ENCODE measurements at regions of chr3 and their contacts with region 1.

Region 1: DNA sequence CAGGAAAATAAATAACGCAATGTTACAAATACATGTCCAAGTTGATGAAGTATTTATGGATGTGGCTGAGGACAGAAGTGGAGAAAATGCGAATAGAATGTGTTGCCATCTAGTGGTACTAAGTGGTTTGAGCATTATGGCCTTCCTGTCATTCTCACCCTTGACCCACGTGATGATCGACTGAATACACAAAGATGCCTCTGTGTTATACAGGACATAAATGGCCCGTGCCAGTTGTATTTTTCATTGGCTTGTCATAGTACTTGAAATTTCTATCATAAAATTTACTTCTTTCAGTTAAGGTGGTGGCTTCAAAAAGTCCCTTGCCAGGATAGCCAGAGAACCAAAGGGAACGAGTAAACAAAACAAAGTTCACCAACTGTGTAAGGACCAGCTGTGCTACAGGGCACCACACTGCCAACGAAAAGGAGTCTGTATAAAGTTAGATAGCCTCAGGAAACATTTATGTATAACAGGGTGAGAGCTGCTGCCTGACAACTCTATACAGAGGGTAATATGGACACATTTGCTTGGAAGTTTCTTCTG is 103.7 kb downstream of the MYH15 start:
- DNase-seq: peak; percentile 68
- ATAC-seq: peak; percentile 99
- H3K4me3 ChIP-seq: no peak overlapping the region
- H3K27ac ChIP-seq: no peak overlapping the region
- H3K4me1 ChIP-seq: peaks cover 4% of the 10 kb centered on the region; the same call in 1 of the 2 replicates
- H3K27me3 ChIP-seq: no peaks in the 10 kb centered on the region
- CTCF ChIP-seq: peak; percentile 67 to 89 (median 86)
- EP300 ChIP-seq: no peak
- POLR2A ChIP-seq: no peak
- RAD21 ChIP-seq: peak; percentile 82

Region 2: DNA sequence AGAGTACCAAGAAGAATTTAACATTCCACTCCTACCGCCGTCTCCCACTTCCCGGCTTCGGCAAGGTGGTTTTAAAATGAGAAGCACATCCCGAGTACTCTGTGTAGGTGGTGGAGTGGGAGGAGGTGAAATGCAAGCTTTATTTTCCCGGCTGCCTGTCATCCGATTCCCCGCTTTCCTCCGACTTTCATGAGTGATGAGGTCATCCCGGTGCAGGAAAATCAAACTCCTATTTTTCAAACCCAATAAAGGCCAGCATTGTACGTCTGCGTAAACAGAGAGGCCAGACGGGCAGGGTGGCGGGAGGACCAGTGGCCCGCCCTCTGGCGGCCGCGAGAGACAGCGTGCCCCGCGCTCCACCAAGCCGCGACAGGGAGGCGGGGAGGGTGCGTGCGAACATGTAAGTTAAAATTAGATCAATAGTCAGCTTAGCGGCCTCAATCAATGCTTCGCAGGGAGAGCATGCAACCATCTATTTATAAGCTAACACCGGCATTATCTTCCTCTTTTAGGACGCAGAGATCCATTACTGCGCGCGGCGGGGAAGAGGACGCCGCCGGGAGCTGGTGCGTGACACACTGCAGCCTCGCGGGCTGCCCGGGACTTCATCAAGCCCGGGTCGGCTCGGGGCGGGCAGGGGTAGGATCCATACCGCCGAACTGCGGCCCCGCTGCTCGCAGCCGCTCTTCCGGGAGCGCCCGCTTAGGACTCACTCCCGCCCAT is 479.2 kb before region 1 on chr3:
- CTCF ChIA-PET with region 1: interaction called, 10 read pairs
- POLR2A ChIA-PET with region 1: no interaction called
- RAD21 ChIA-PET with region 1: no interaction called
- SMC1A ChIA-PET with region 1: interaction called, 6 read pairs
- in situ Hi-C with region 1: no loop called
- intact Hi-C with region 1: no loop called
- DNase-seq: no peak
- ATAC-seq: peak; percentile 99
- H3K4me3 ChIP-seq: peak overlapping the region; percentile 57; the same call in 1 of the 2 replicates
- H3K27ac ChIP-seq: no peak overlapping the region
- H3K4me1 ChIP-seq: peaks cover 3% of the 10 kb centered on the region; the same call in 1 of the 2 replicates
- H3K27me3 ChIP-seq: peaks cover 0 to 5% of the 10 kb centered on the region in 2 experiments; a peak in 3 of 4 replicates
- CTCF ChIP-seq: peak; percentile 77 to 93 (median 91)
- EP300 ChIP-seq: no peak
- POLR2A ChIP-seq: no peak
- RAD21 ChIP-seq: peak; percentile 60

Region 3: GRCh38 chr3:108090701-108091451 is 315.9 kb before region 1 on chr3 and contains the start of gene CD47:
- CTCF ChIA-PET with region 1: no interaction called
- POLR2A ChIA-PET with region 1: no interaction called
- RAD21 ChIA-PET with region 1: no interaction called
- SMC1A ChIA-PET with region 1: interaction called, 3 read pairs
- in situ Hi-C with region 1: no loop called
- intact Hi-C with region 1: loop called (anchors 5 kb)
- DNase-seq: no peak
- ATAC-seq: peak; percentile 72
- H3K4me3 ChIP-seq: peak within 1 kb of the TSS; percentile 95
- H3K27ac ChIP-seq: peak within 1 kb of the TSS; percentile 95
- H3K4me1 ChIP-seq: peaks cover 12% of the 10 kb centered on the region; the same call in 1 of the 2 replicates
- H3K27me3 ChIP-seq: no peaks in the 10 kb centered on the region
- CTCF ChIP-seq: no peak
- EP300 ChIP-seq: no peak
- POLR2A ChIP-seq: peak; percentile 85
- RAD21 ChIP-seq: no peak
- polyA plus RNA-seq, gene CD47: 22.9 to 61.6 TPM

Region 4: DNA sequence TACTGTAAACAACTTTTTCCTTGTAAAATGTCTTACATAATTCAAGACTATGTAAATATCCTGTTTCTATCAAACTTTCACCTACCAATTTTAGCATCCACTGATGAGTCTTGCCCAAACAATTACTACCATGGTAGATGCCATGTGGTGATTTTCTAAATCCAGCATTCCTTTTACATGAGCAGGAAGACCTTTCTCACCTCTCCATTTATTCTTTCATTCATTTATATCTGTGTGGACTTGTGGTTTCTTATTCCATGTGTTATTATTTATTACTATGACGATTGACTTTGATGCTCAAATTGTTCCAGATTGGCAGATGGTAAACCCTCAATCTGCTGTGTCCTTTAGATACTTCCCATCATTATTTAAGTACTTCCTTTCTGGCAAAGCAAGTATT is 246.9 kb before region 1 on chr3:
- CTCF ChIA-PET with region 1: interaction called, 31 read pairs
- POLR2A ChIA-PET with region 1: no interaction called
- RAD21 ChIA-PET with region 1: interaction called, 7 read pairs
- SMC1A ChIA-PET with region 1: interaction called, 23 read pairs
- in situ Hi-C with region 1: no loop called
- intact Hi-C with region 1: no loop called
- DNase-seq: no peak
- ATAC-seq: no peak
- H3K4me3 ChIP-seq: no peak overlapping the region
- H3K27ac ChIP-seq: no peak overlapping the region
- H3K4me1 ChIP-seq: no peaks in the 10 kb centered on the region
- H3K27me3 ChIP-seq: no peaks in the 10 kb centered on the region
- CTCF ChIP-seq: no peak
- EP300 ChIP-seq: no peak
- POLR2A ChIP-seq: no peak
- RAD21 ChIP-seq: no peak

Region 5: DNA sequence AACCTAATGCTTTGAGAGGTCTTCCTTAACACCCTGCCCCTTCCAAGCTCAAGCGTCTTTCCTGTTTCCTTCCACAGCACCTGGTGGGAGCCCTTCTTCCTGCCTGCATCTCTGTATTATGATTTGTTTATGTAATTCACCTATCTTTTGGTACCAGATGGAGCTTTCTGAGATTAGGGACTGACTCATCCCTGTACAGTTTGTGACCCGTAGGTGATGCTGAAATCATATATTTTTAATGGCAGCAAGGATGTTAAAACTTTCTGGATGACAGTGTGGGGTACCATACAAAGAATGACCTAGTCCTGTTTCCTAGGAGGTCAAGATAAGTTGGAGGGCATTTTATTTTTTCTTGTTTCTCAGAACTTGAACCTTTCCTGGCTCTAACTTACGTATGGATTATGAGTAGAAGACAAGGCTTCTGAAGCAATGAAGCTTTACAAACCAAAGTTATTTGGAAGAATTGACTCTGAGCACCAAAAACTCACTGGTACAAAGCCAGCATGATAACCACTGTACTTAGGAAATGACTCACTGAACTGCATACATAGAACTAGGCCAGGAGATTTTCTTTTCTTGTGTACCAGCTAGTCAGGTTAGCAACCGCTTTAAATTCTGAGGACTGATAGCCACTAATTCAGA is 63.8 kb before region 1 on chr3:
- CTCF ChIA-PET with region 1: interaction called, 6 read pairs
- POLR2A ChIA-PET with region 1: no interaction called
- RAD21 ChIA-PET with region 1: interaction called, 4 read pairs
- SMC1A ChIA-PET with region 1: interaction called, 7 read pairs
- in situ Hi-C with region 1: no loop called
- intact Hi-C with region 1: loop called (anchors 5 kb)
- DNase-seq: peak; percentile 36
- ATAC-seq: peak; percentile 87
- H3K4me3 ChIP-seq: no peak overlapping the region
- H3K27ac ChIP-seq: no peak overlapping the region
- H3K4me1 ChIP-seq: peaks cover 10% of the 10 kb centered on the region
- H3K27me3 ChIP-seq: no peaks in the 10 kb centered on the region
- CTCF ChIP-seq: no peak
- EP300 ChIP-seq: no peak
- POLR2A ChIP-seq: no peak
- RAD21 ChIP-seq: no peak

Region 6: GRCh38 chr3:108461661-108462111 is 55.0 kb after region 1 on chr3:
- CTCF ChIA-PET with region 1: no interaction called
- POLR2A ChIA-PET with region 1: no interaction called
- RAD21 ChIA-PET with region 1: no interaction called
- SMC1A ChIA-PET with region 1: no interaction called
- in situ Hi-C with region 1: no loop called
- intact Hi-C with region 1: no loop called
- DNase-seq: no peak
- ATAC-seq: no peak
- H3K4me3 ChIP-seq: no peak overlapping the region
- H3K27ac ChIP-seq: no peak overlapping the region
- H3K4me1 ChIP-seq: no peaks in the 10 kb centered on the region
- H3K27me3 ChIP-seq: no peaks in the 10 kb centered on the region
- CTCF ChIP-seq: no peak
- EP300 ChIP-seq: no peak
- POLR2A ChIP-seq: no peak
- RAD21 ChIP-seq: no peak

Region 7: GRCh38 chr3:108477511-108478147 is 70.9 kb after region 1 on chr3:
- CTCF ChIA-PET with region 1: interaction called, 7 read pairs
- POLR2A ChIA-PET with region 1: no interaction called
- RAD21 ChIA-PET with region 1: interaction called, 4 read pairs
- SMC1A ChIA-PET with region 1: interaction called, 9 read pairs
- in situ Hi-C with region 1: no loop called
- intact Hi-C with region 1: loop called (anchors 2 kb)
- DNase-seq: peak; percentile 12
- ATAC-seq: peak; percentile 89
- H3K4me3 ChIP-seq: no peak overlapping the region
- H3K27ac ChIP-seq: no peak overlapping the region
- H3K4me1 ChIP-seq: no peaks in the 10 kb centered on the region
- H3K27me3 ChIP-seq: no peaks in the 10 kb centered on the region
- CTCF ChIP-seq: peak; percentile 66 to 70 (median 69)
- EP300 ChIP-seq: no peak
- POLR2A ChIP-seq: no peak
- RAD21 ChIP-seq: peak; percentile 86

Region 8: DNA sequence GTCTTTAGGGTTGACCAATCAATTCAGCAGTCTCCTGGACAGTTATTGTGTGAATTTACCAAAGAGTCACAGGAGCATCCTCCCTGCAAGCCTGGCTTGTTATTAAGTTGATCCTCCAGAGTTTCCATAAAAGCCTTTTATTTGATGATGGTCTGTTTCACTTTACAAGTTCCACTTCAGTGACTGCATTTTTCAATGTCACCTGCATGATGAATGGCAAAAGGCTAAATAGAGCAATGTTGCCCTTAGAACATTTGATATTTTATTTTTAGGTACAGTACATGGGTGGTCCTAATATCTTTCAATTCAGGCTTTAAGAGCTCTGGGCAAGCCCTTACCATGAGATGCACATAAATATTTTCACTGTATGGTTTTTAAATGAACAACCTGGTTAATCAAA is 524.3 kb after region 1 on chr3:
- CTCF ChIA-PET with region 1: no interaction called
- POLR2A ChIA-PET with region 1: no interaction called
- RAD21 ChIA-PET with region 1: no interaction called
- SMC1A ChIA-PET with region 1: no interaction called
- in situ Hi-C with region 1: no loop called
- intact Hi-C with region 1: no loop called
- DNase-seq: no peak
- ATAC-seq: no peak
- H3K4me3 ChIP-seq: no peak overlapping the region
- H3K27ac ChIP-seq: no peak overlapping the region
- H3K4me1 ChIP-seq: no peaks in the 10 kb centered on the region
- H3K27me3 ChIP-seq: no peaks in the 10 kb centered on the region
- CTCF ChIP-seq: no peak
- EP300 ChIP-seq: no peak
- POLR2A ChIP-seq: no peak
- RAD21 ChIP-seq: no peak

Region 9: GRCh38 chr3:109132801-109133473 is 726.2 kb after region 1 on chr3:
- CTCF ChIA-PET with region 1: no interaction called
- POLR2A ChIA-PET with region 1: no interaction called
- RAD21 ChIA-PET with region 1: no interaction called
- SMC1A ChIA-PET with region 1: no interaction called
- in situ Hi-C with region 1: no loop called
- intact Hi-C with region 1: no loop called
- DNase-seq: no peak
- ATAC-seq: no peak
- H3K4me3 ChIP-seq: no peak overlapping the region
- H3K27ac ChIP-seq: no peak overlapping the region
- H3K4me1 ChIP-seq: no peaks in the 10 kb centered on the region
- H3K27me3 ChIP-seq: no peaks in the 10 kb centered on the region
- CTCF ChIP-seq: no peak
- EP300 ChIP-seq: no peak
- POLR2A ChIP-seq: no peak
- RAD21 ChIP-seq: no peak

Region 10: GRCh38 chr3:110031975-110032374 is 1625.2 kb after region 1 on chr3:
- CTCF ChIA-PET with region 1: no interaction called
- POLR2A ChIA-PET with region 1: no interaction called
- RAD21 ChIA-PET with region 1: no interaction called
- SMC1A ChIA-PET with region 1: no interaction called
- in situ Hi-C with region 1: no loop called
- intact Hi-C with region 1: no loop called
- DNase-seq: no peak
- ATAC-seq: no peak
- H3K4me3 ChIP-seq: no peak overlapping the region
- H3K27ac ChIP-seq: no peak overlapping the region
- H3K4me1 ChIP-seq: no peaks in the 10 kb centered on the region
- H3K27me3 ChIP-seq: no peaks in the 10 kb centered on the region
- CTCF ChIP-seq: no peak
- EP300 ChIP-seq: no peak
- POLR2A ChIP-seq: no peak
- RAD21 ChIP-seq: no peak